Sigmoid colon (tissue), 7 donors: ENCODE measurements at regions of chr7 and their contacts with region 1.

Region 1: DNA sequence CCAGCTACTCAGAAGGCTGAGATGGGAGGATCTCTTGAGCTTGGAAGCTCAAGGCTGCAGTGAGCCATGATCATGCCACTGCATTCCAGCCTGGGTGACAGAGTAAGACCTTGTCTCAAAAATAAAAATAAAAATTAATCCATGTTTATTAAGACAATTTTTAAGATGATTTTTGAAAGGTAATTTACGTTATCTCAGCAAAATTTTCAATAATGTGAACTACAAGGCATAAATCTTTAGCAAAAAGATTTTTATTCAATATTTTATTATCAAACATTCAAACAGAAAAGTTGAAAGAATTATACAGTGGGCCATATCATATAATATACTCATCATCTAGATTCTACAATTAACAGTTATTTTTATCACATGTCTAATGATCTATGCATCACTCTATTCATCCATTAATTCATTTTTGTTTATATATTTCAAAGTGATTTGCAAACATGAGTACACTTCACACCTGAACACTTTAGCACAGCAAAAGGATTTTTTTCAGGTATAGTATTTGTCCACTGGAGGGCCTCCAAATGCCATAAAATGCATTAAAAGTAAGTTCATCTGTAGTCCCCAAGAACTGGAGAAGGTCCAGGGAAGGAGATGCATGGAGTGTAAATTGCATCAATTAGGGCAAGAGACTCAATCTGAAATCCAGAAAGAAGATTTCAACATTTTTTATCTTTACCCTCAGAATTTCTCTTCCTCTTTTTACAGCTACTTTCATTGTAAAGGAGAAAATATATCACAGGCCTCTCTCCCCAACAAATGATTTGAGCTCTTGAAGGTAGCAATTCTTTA is 38.6 kb upstream of the RSBN1L start:
- DNase-seq: no peak
- H3K4me3 ChIP-seq: no peak overlapping the region
- H3K27ac ChIP-seq: no peak overlapping the region
- H3K4me1 ChIP-seq: peaks cover 0 to 13% (median 6%) of the 10 kb centered on the region in 4 donors
- H3K27me3 ChIP-seq: no peaks in the 10 kb centered on the region
- CTCF ChIP-seq: peak in 3 of 4 experiments; percentile 29 to 40 (median 33)
- EP300 ChIP-seq: no peak
- POLR2A ChIP-seq: no peak

Region 2: GRCh38 chr7:77696198-77697028 is 38.8 kb after region 1 on chr7 and contains the start of gene RSBN1L:
- intact Hi-C with region 1: loop called (anchors 5 kb)
- DNase-seq: peak; percentile 99
- H3K4me3 ChIP-seq: peak within 1 kb of the TSS; percentile 76 to 90 (median 89)
- H3K27ac ChIP-seq: peak within 1 kb of the TSS; percentile 96 to 100 (median 96)
- H3K4me1 ChIP-seq: peaks cover 0 to 63% (median 44%) of the 10 kb centered on the region in 4 donors
- H3K27me3 ChIP-seq: no peaks in the 10 kb centered on the region
- CTCF ChIP-seq: peak in 3 of 4 experiments; percentile 18 to 39 (median 26)
- EP300 ChIP-seq: no peak
- POLR2A ChIP-seq: peak; percentile 68 to 89
- total RNA-seq, gene RSBN1L: 29.3 to 50.4 (median 40.7) TPM

Region 3: DNA sequence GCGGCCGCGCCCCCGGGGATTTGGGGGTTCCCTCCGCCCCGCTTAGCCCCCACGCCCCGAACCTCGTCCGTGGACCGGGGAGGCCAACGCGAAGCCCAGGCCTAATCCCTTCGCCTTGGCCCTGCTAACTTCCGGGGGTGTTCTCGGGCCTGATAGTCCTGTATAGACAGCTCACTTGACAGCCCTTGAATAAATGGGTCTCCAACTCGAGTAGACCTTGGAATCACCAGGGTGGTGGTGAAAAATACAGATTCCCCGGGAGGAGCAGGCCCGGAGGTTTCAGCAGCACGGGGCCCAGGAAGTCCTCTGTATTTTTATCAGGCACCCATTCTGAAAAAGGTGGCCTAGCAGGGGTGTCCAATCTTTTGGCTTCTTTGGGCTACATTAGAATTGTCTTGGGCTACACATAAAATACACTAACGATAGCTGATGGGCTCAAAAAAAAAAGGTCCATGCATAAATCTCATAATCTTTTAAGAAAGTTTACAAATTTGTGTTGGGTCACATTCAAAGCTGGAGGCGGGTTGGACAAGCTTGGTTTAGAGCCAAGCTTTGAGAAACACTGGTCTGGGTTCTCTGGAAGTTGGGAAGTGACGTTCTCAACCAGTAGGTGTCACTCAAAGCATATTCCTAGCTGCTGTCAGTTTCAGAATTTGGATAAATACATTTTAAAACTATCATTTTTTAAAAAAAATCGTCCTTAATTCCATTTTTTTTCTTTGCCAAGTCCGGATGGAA is 362.7 kb after region 1 on chr7:
- intact Hi-C with region 1: loop called (anchors 10 kb)
- DNase-seq: peak; percentile 80
- H3K4me3 ChIP-seq: peak overlapping the region; percentile 41 to 61 (median 58)
- H3K27ac ChIP-seq: peak overlapping the region; percentile 96 to 97 (median 97)
- H3K4me1 ChIP-seq: peaks cover 0 to 30% (median 14%) of the 10 kb centered on the region in 4 donors
- H3K27me3 ChIP-seq: no peaks in the 10 kb centered on the region
- CTCF ChIP-seq: peak in 3 of 4 experiments; percentile 36 to 71 (median 43)
- EP300 ChIP-seq: no peak
- POLR2A ChIP-seq: no peak

Region 4: GRCh38 chr7:78499283-78499682 is 841.7 kb after region 1 on chr7:
- intact Hi-C with region 1: no loop called
- DNase-seq: no peak
- H3K4me3 ChIP-seq: no peak overlapping the region
- H3K27ac ChIP-seq: no peak overlapping the region
- H3K4me1 ChIP-seq: no peaks in the 10 kb centered on the region
- H3K27me3 ChIP-seq: no peaks in the 10 kb centered on the region
- CTCF ChIP-seq: no peak
- EP300 ChIP-seq: no peak
- POLR2A ChIP-seq: no peak